ENCODE measurements at regions of chr6 and their contacts with region 1.

Region 1: DNA sequence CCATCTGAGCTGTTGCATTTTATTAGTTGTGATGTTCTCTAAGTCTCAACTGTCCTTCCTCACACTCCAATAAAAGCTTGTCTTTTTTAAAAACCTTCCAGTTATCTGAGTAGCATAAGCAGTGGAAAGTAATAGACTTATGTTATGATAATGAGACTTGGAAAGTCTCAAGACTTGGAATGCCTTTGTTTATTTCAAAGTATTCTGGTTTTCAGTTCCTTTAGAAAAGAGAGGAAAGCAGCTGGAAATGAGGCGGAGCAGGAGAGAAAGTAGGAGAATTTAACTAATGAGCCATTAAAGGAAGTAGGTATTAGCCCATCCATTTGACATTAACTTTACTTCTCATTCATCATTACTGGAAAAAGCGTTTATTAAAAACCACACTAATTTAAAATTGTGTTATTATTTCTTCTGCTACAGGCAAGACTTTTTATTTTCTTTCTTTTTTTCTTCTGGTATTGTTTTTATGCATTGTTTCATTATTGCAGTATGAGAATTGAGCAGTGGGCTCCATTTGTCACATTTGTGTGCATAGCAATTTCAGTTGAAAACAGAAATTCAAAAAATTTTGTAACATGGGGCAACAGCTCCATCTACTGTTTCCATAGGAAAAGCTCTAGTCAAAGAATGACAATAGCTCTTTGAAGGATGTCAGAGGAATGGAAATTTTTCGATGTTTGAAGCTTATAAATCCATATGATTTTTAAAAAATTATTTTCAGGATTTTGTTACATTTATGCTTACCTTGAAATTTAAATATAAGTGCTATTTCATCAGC is 194.8 kb downstream of the COL9A1 start:
- DNase-seq: no peak
- ATAC-seq: peak in 1 of 2 donors; percentile 50

Region 2: DNA sequence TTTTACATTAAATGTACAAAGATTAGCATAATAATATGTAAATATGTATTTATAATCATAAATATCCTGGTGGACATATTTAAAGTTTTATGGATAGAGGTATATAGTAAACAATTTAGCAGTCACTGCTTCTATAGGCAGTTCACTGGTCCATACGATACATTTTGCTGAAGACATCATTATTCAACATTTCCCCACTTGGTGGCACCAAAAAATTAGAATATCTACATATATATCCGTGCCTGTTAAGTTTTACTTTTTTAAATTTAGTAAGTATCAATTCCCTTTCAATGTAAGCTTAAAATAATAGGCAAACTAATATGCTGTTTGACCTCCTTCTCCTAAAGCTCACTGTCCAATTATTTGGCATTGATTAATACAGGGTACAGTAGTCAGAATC is 375.4 kb before region 1 on chr6:
- intact Hi-C with region 1: loop called in 1 of 2 experiments (anchors 10 kb)
- DNase-seq: no peak
- ATAC-seq: no peak

Region 3: GRCh38 chr6:69835414-69836179 is 272.4 kb before region 1 on chr6:
- intact Hi-C with region 1: loop called (anchors 5 kb)
- DNase-seq: no peak
- ATAC-seq: peak in 1 of 2 donors; percentile 58

Measured in left cardiac atrium (tissue), 4 donors.